Left ventricle myocardium superior (tissue), 1 donor: ENCODE measurements at regions of chr7 and their contacts with region 1.

Region 1: DNA sequence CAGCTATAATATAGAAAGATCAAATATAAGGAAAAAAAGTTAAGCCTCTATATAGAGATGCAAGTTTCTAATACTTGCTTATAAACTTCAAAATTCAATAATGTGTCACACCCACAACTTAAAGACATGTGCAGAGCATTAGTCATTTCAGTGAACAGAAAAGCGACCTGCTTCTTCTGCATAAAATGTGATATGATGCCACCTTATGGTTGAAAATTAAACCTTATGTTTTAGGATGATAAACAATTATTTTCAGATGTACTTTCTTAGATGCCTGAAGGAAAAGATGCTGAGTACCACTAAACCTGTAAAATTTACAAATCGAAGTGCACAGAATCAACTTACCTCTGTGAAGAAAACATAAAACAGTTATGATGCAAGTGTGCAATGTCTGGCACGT is 96.0 kb downstream of the MTERF1 start:
- DNase-seq: no peak
- ATAC-seq: peak; percentile 34

Region 2: DNA sequence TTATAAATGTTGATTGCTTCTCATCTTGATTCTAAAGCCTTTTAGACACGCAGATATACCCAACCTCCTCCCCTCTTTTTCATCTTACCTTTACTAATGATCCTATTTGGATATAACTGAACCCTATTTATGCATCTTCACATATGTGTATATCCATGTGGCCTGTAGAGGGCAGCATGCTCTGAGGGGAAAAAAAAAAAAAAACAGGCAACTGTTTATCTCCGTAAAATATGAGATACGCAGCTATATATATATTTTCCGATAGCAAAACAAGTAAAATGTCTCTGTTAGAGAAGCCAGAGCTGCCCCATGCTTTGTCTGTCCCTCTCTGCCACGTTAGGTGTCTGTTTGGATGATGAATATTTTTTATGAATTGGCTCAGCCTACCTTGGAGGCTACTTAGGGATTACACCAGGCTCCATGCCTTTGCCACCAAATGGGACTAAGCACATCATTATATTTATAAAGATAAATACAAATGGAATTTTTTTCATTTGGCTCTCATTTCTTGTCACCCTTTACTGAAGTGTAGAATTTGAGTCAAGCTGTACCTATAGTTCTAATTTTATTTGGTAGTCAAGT is 695.0 kb before region 1 on chr7:
- intact Hi-C with region 1: loop called (anchors 10 kb)
- DNase-seq: no peak
- ATAC-seq: peak; percentile 70